ENCODE measurements at regions of chr3 and their contacts with region 1.

Region 1: DNA sequence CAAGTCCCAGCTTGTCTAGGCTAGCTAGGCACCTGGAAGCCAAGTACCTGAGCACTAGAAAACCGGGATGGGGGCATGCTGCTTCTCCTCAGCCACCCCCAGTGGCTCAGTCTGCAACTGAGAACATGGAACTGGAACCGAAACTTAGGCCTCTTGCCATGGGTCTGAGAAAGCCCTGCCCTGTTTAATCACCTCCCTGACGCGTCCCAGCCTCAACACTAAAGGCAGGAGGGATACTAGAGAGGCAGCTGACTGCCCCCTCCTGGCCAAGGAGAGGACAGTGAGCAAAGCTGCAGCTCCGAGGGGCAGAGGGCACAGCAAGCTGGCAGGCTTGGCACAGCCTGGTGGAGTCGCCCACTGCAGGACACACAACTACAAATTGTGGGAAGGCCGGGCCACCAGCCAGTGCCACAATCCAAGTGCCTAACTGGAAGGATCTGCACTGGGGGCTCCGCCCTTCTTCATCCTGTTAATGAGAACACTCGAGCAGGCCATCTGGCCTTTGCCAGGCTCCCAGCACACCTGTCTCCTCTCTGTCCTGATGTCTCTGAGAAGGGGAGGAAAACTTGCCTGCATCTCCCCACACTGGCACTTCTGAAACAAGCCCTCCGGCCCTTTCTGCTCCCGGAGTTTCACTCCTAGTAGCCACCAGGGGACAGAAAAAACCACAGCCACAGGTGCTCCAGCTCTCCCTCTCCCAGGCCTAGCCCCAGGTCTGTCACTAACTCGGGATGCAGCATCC is 53.7 kb downstream of the BDH1 start:
- ATAC-seq: peak; percentile 59 to 95 (median 75)
- H3K4me3 ChIP-seq: no peak overlapping the region
- H3K27ac ChIP-seq: no peak overlapping the region
- H3K4me1 ChIP-seq: peaks cover 6 to 11% of the 10 kb centered on the region in 2 donors

Region 2: GRCh38 chr3:196047391-196048030 is 1454.5 kb before region 1 on chr3:
- in situ Hi-C with region 1: no loop called
- ATAC-seq: no peak
- H3K4me3 ChIP-seq: no peak overlapping the region
- H3K27ac ChIP-seq: no peak overlapping the region
- H3K4me1 ChIP-seq: peaks cover 0 to 4% of the 10 kb centered on the region in 2 donors

Region 3: DNA sequence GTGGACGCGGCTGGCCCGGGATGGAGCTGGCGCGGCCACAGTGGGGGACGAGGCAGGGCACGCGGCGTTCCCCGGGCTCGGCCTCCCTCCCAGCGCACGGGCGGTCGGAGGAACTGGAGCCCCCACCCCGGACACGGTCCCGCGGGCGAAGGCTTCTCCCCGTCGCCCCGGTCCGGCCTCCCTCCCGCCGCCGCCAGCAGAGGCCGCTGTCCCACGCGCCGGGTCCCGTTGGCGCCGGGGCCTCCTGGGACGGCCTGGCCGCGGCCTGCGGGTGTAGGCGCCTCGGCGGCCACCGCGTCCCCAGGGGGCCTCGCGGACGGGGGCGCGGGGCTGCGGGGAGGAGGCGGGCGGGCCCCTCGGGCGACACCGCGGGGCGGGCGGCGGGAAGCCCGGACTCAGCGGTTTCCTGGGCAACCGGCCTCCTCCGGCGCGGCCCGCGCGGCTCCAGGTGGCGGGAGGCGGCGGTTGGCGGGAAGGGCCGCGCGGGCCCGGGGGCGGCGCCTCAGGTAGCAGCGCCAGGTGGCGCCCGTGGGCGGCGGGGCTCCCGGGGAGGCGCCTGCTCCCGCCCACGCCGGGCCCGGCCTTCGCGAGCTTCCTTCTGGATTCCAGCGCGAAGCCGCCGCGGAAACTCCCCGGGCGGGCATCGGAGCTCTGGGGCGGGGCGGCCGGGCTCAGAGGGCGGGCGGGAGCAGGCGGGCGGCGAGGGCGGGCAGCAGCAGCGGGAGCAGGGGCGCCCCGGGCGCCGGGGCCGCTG is 499.2 kb before region 1 on chr3:
- in situ Hi-C with region 1: loop called in 1 of 9 experiments (anchors 25 kb)
- ATAC-seq: peak; percentile 79 to 91 (median 84)
- H3K4me3 ChIP-seq: peak overlapping the region; percentile 38 to 59 (median 38)
- H3K27ac ChIP-seq: peak overlapping the region in 1 of 2 donors; percentile 60
- H3K4me1 ChIP-seq: peaks cover 7 to 17% of the 10 kb centered on the region in 2 donors

Region 4: DNA sequence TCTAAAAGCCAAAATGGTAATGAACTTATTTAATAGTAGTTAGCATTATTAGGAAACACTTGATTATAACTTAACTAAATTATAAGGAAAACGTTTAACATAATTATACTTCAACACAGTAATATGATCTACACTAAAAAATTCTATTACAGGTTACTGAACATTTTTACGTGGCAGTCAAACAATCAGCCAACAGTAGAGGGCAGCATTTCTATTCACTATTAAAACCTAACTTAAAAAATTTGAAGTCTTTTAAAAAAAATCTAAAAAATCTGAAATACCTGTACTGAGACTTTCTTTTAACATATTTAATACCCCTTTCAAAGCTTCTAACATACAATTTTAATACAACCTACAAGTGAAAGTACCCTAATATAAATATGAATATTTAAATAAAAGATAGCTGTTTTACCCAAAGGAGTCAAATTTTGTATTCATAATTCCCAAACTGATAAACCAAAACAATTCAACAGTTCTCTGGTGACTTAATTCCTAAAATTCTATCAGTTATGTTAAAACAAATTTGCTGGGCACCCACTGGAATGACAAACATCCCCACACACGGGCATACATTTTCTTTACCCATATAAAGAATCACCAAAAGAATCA is 245.1 kb before region 1 on chr3:
- in situ Hi-C with region 1: loop called in 6 of 9 experiments (anchors 25 kb)
- ATAC-seq: no peak
- H3K4me3 ChIP-seq: no peak overlapping the region
- H3K27ac ChIP-seq: no peak overlapping the region
- H3K4me1 ChIP-seq: peaks cover 13 to 20% of the 10 kb centered on the region in 2 donors

Region 5: DNA sequence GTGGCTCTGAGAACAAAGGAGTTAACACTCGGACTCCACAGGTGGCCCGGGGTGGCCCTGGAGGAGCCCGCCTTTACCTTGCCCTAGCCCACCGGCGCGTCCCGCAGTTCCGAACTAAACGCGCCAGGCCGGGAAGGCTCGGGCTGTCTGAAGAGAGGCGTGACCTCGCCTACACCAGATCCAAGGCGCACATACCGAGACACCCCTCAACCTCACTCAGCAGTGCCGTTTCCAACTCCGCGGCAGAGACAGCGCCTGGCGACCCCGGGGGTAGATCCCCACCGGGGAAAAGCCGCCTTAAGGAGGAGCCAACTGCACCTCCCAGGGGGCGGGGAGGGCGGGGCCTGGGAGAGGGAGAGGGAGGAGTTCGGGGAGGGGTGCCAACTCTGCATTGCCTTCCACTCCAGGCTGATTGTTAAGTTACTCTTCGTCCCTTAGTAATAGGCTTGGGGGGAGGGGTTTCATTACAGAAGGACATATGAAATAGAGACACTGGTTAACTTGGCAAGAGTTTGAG is 203.7 kb before region 1 on chr3 and contains the start of gene DLG1:
- in situ Hi-C with region 1: loop called in 1 of 9 experiments (anchors 25 kb)
- ATAC-seq: peak; percentile 55 to 74 (median 62)
- H3K4me3 ChIP-seq: peak within 1 kb of the TSS; percentile 59 to 94 (median 78)
- H3K27ac ChIP-seq: peak within 1 kb of the TSS; percentile 45 to 91
- H3K4me1 ChIP-seq: peaks cover 0 to 10% of the 10 kb centered on the region in 2 donors
- total RNA-seq, gene DLG1: 20.3 to 109 (median 47.7) TPM

Region 6: GRCh38 chr3:197711973-197712707 is 210.1 kb after region 1 on chr3:
- in situ Hi-C with region 1: no loop called
- ATAC-seq: peak; percentile 99 to 100 (median 100)
- H3K4me3 ChIP-seq: peak overlapping the region; percentile 20 to 29 (median 26)
- H3K27ac ChIP-seq: peak overlapping the region; percentile 73 to 82
- H3K4me1 ChIP-seq: peaks cover 12 to 14% of the 10 kb centered on the region in 2 donors

Region 7: DNA sequence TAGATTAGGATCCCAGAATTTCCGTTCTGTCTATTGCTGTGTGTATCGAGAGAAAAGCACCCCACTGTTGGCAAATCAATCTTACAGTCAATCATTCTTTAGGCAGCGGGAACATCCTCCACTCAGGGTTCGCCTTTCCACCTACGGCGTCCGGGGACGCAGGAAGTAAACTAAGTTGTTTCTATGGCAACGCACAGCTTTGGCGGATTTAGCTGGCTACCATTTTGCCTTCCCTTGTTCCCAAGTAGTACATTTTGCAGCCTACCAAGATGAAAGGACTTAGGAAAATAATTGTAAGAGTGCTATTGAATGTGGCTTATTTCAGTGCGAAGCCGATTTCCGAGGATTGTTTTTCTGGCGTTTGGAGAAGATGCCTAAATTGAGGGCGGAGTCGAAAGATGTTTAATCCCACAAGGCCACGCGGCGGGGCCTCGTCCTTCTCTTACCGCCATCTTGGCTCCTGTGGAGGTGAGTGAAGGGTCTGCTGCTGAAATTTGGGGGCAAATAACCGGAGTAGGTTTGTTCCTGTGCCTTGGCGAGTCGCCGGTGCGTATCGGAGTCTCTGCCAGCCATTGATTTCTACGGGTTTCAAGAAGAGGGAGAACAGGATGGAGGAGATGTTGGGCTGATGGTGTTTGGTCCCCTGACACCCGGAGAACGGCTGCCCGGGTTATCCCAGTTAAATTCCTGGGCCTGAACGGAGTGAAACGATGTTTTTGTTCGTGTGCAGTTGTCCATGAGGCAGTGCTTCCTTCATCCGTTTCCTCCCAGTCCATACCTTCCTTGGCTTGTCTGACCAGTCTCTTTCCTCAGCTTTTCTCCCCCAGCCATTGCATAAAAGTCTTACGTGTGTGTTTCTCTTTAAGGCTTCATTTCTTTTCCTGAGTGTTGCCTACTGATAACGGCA is 448.0 kb after region 1 on chr3 and contains the start of gene RPL35A:
- in situ Hi-C with region 1: no loop called
- ATAC-seq: peak; percentile 88 to 94 (median 90)
- H3K4me3 ChIP-seq: peak within 1 kb of the TSS; percentile 53 to 61 (median 56)
- H3K27ac ChIP-seq: peak within 1 kb of the TSS; percentile 98
- H3K4me1 ChIP-seq: peaks cover 12 to 22% of the 10 kb centered on the region in 2 donors
- total RNA-seq, gene RPL35A: 997 to 3,157 (median 2,160) TPM

Measured in motor neuron (in vitro differentiated cells).